Natural killer cell (primary cell): ENCODE measurements at regions of chr3 and their contacts with region 1.

Region 1: DNA sequence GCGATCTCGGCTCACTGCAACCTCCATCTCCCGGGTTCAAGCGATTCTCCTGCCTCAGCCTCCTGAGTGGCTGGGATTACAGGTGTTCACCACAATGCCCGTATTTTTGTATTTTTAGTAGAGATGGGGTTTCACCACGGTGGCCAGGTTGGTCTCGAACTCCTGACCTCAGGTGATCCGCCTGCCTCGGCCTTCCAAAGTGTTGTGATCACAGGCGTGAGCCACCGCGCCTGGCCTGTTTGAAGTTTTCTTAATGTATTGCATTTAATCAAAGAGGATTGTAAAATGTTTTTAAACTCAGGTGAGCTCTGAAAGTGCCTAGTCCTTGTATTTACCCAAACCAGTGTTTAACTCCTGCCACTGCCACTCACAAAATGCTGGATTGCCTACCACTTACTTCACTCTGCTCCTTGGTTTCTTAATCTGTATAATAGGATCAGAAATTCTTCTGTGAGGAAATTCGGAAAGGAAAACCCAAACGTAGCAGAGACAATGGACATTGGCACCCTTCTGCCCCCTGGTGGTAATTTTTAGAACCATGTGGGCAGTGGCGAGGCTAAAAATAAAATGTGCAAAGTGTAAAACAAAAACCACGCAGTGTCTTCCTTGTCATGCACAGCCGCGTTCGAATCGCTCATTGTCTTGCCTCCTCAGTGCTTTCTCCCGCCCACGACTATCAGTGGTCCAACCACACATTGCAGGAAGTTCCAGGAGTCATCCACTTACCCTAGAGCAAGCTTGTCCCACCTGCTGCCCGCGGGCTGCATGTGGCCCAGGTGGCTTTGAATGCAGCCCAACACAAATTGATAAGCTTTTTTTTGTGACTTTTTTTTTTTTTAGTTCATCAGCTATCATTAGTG is 27.3 kb downstream of the CEP19 start:
- DNase-seq: peak; percentile 54 to 87
- ATAC-seq: peak; percentile 85 to 94 (median 91)
- H3K4me3 ChIP-seq: no peak overlapping the region
- H3K4me3 Mint-ChIP-seq: peak overlapping the region; percentile 80
- H3K27ac ChIP-seq: no peak overlapping the region
- H3K27ac Mint-ChIP-seq: peak overlapping the region; percentile 45 to 79
- H3K4me1 ChIP-seq: peaks cover 16% of the 10 kb centered on the region
- H3K4me1 Mint-ChIP-seq: peaks cover 16 to 17% of the 10 kb centered on the region in 2 donors
- H3K27me3 ChIP-seq: no peaks in the 10 kb centered on the region
- H3K27me3 Mint-ChIP-seq: no peaks in the 10 kb centered on the region
- CTCF ChIP-seq: peak; percentile 95

Region 2: DNA sequence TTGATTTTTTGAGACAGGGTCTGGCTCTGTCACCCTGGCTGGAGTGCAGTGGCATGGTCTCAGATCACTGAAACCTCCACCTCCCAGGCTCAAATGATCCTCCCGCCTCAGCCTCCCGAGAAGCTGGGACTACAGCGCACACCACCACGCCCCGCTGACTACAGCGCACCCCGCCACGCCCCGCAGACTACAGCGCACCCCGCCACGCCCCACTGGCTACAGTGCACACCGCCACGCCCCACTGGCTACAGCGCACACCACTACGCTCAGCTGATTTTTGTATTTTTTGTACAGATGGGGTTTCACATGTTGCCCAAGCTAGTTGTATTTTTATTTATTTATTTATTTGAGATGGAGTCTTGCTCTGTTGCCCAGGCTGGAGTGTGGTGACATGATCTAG is 432.9 kb before region 1 on chr3:
- intact Hi-C with region 1: loop called (anchors 10 kb)
- DNase-seq: no peak
- ATAC-seq: no peak
- H3K4me3 ChIP-seq: no peak overlapping the region
- H3K4me3 Mint-ChIP-seq: no peak overlapping the region
- H3K27ac ChIP-seq: no peak overlapping the region
- H3K27ac Mint-ChIP-seq: no peak overlapping the region
- H3K4me1 ChIP-seq: no peaks in the 10 kb centered on the region
- H3K4me1 Mint-ChIP-seq: peaks cover 5 to 14% of the 10 kb centered on the region in 2 donors
- H3K27me3 ChIP-seq: no peaks in the 10 kb centered on the region
- H3K27me3 Mint-ChIP-seq: no peaks in the 10 kb centered on the region
- CTCF ChIP-seq: no peak

Region 3: GRCh38 chr3:196609343-196609775 is 75.4 kb before region 1 on chr3:
- intact Hi-C with region 1: loop called (anchors 1 kb)
- DNase-seq: peak; percentile 88 to 94
- ATAC-seq: peak; percentile 86 to 96 (median 88)
- H3K4me3 ChIP-seq: no peak overlapping the region
- H3K4me3 Mint-ChIP-seq: peak overlapping the region; percentile 76
- H3K27ac ChIP-seq: peak overlapping the region; percentile 50
- H3K27ac Mint-ChIP-seq: peak overlapping the region; percentile 83 to 88
- H3K4me1 ChIP-seq: peaks cover 47% of the 10 kb centered on the region
- H3K4me1 Mint-ChIP-seq: peaks cover 43 to 45% of the 10 kb centered on the region in 2 donors
- H3K27me3 ChIP-seq: no peaks in the 10 kb centered on the region
- H3K27me3 Mint-ChIP-seq: no peaks in the 10 kb centered on the region
- CTCF ChIP-seq: peak; percentile 99

Region 4: GRCh38 chr3:196639483-196640296 is 45.1 kb before region 1 on chr3 and contains the start of gene NRROS:
- intact Hi-C with region 1: loop called (anchors 5 kb)
- DNase-seq: peak; percentile 66 to 76
- ATAC-seq: peak; percentile 37 to 79 (median 64)
- H3K4me3 ChIP-seq: peak within 1 kb of the TSS; percentile 88
- H3K4me3 Mint-ChIP-seq: peak within 1 kb of the TSS; percentile 93
- H3K27ac ChIP-seq: peak within 1 kb of the TSS; percentile 81
- H3K27ac Mint-ChIP-seq: peak within 1 kb of the TSS; percentile 96 to 98
- H3K4me1 ChIP-seq: peaks cover 89% of the 10 kb centered on the region
- H3K4me1 Mint-ChIP-seq: peaks cover 91 to 96% of the 10 kb centered on the region in 2 donors
- H3K27me3 ChIP-seq: no peaks in the 10 kb centered on the region
- H3K27me3 Mint-ChIP-seq: no peaks in the 10 kb centered on the region
- CTCF ChIP-seq: no peak
- total RNA-seq, gene NRROS: 32.5 to 56.3 (median 56.2) TPM

Region 5: DNA sequence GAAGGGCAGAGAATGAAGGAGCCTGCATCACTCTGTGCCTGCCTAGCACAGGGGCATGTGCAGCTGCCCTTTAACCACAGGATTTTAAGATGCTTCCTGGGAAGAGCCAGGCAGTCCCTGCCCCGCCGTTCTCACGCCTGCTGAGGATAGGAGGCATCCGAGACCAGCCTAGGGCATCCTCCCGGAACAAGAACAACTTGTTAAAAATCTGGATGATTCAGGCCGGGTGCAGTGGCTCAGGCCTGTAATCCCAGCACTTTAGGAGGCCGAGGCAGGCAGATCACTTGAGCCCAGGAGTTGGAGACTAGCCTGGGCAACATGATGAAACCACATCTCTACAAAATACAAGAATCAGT is 30.1 kb before region 1 on chr3:
- intact Hi-C with region 1: loop called (anchors 1 kb)
- DNase-seq: no peak
- ATAC-seq: no peak
- H3K4me3 ChIP-seq: no peak overlapping the region
- H3K4me3 Mint-ChIP-seq: no peak overlapping the region
- H3K27ac ChIP-seq: no peak overlapping the region
- H3K27ac Mint-ChIP-seq: peak overlapping the region; percentile 27 to 72
- H3K4me1 ChIP-seq: peaks cover 59% of the 10 kb centered on the region
- H3K4me1 Mint-ChIP-seq: peaks cover 52 to 55% of the 10 kb centered on the region in 2 donors
- H3K27me3 ChIP-seq: no peaks in the 10 kb centered on the region
- H3K27me3 Mint-ChIP-seq: no peaks in the 10 kb centered on the region
- CTCF ChIP-seq: no peak